IMR-90 (cell line): ENCODE measurements at regions of chr11 and their contacts with region 1.

Region 1: DNA sequence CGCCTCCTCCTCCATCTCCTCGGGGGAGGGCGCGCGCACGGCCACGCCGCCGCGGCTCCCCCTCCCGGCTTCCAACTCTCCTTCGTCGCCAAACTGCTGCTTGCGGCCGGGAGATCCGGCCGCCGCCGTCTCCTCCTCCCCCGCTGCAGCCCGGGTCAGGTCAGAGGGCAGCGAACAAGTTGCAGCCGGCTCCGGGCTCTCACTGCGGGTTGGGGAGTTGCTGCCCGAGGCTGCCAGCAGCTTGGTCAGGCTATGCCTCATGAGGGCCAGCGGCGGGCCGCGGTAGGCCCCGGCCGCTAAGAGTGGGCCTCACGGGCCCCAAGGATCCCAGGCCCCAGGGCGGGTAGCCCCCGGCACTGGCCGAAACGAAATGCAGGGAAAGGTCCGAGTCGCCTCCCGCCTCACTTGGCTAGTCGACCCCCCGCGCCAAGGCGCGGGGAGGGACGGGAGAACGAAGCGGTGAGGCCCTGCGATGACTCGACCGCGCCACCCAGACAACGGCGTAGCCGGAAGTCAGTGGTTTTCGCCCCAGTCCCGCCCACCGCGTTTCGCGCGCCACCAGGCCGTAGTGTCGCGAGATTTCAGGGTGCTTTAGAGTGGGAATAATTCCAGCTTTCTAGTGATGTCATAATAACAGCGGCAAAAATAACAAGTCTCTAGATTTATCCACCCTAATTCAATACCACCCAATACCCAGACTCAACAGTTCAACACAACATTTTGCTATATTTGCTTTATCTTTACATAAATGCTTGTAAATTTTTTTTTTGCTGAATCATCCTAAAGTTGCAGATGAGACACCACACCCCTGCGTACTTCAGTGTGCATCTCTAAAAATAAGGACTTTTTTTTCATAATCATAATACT is at the start of gene CREBZF:
- DNase-seq: peak; percentile 95
- ATAC-seq: peak; percentile 92
- H3K4me3 ChIP-seq: peak within 1 kb of the TSS; percentile 96
- H3K27ac ChIP-seq: peak within 1 kb of the TSS; percentile 85
- H3K4me1 ChIP-seq: no peaks in the 10 kb centered on the region; the same call in 1 of the 2 replicates
- H3K27me3 ChIP-seq: no peaks in the 10 kb centered on the region
- CTCF ChIP-seq: no peak
- POLR2A ChIP-seq: peak; percentile 94
- RAD21 ChIP-seq: no peak
- total RNA-seq, gene CREBZF: 12.5 and 24.4 TPM in 2 replicates

Region 2: DNA sequence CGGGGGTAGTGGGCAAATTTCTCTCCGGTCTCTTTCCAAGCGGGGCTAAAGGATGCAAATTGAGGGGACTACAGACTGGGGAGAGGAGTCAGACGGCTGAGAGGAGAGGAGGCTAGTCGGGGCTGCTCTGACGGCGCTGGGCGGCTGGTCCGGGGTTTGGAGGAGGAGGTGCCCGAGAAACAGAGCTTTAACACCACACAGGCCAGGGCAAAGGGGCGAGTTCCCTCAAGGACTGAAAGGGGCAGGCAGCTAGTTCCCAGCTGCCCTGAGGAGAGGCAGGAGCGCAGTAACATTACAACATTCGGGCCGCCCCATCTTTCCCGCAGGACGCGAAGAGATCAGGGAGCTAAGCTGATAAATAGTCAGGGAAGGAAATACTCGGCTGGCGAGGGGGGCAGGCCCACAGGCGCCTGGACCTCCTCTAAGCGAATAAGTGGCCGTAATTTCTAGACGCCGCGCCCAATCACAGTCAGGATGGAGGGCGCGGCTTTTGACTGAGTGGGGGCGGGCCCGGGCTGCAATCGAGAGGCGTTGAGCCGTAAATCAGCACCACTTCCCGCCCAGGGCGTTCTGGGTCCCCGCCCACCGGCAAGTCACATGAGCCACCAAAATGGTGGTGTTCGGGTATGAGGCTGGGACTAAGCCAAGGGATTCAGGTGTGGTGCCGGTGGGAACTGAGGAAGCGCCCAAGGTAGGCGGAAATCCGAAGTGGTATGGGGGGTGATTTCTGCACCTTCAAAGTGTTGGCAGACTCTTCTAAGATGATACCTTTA is 36.7 kb before region 1 on chr11 and contains the start of gene TMEM126B:
- CTCF ChIA-PET with region 1: no interaction called
- POLR2A ChIA-PET with region 1: interaction called, 16 read pairs
- dilution Hi-C with region 1: no loop called
- in situ Hi-C with region 1: no loop called
- intact Hi-C with region 1: loop called (anchors 2 kb)
- DNase-seq: peak; percentile 94
- ATAC-seq: peak; percentile 99
- H3K4me3 ChIP-seq: peak within 1 kb of the TSS; percentile 74
- H3K27ac ChIP-seq: peak within 1 kb of the TSS; percentile 86
- H3K4me1 ChIP-seq: peaks cover 2% of the 10 kb centered on the region
- H3K27me3 ChIP-seq: no peaks in the 10 kb centered on the region
- CTCF ChIP-seq: no peak
- POLR2A ChIP-seq: peak; percentile 54; the same call in 1 of the 2 replicates
- RAD21 ChIP-seq: no peak
- total RNA-seq, gene TMEM126B: 56.8 and 79.4 TPM in 2 replicates

Region 3: GRCh38 chr11:85682330-85683305 is 17.8 kb after region 1 on chr11:
- CTCF ChIA-PET with region 1: interaction called, 8 read pairs
- POLR2A ChIA-PET with region 1: no interaction called
- dilution Hi-C with region 1: no loop called
- in situ Hi-C with region 1: no loop called
- intact Hi-C with region 1: loop called (anchors 1 kb)
- DNase-seq: peak; percentile 47
- ATAC-seq: peak; percentile 24; the same call in 1 of the 2 replicates
- H3K4me3 ChIP-seq: peak overlapping the region; percentile 89
- H3K27ac ChIP-seq: peak overlapping the region; percentile 78
- H3K4me1 ChIP-seq: peaks cover 2% of the 10 kb centered on the region; the same call in 1 of the 2 replicates
- H3K27me3 ChIP-seq: no peaks in the 10 kb centered on the region
- CTCF ChIP-seq: no peak
- POLR2A ChIP-seq: no peak
- RAD21 ChIP-seq: no peak